IMR-90 (cell line): ENCODE measurements at regions of chr9 and their contacts with region 1.

Region 1: DNA sequence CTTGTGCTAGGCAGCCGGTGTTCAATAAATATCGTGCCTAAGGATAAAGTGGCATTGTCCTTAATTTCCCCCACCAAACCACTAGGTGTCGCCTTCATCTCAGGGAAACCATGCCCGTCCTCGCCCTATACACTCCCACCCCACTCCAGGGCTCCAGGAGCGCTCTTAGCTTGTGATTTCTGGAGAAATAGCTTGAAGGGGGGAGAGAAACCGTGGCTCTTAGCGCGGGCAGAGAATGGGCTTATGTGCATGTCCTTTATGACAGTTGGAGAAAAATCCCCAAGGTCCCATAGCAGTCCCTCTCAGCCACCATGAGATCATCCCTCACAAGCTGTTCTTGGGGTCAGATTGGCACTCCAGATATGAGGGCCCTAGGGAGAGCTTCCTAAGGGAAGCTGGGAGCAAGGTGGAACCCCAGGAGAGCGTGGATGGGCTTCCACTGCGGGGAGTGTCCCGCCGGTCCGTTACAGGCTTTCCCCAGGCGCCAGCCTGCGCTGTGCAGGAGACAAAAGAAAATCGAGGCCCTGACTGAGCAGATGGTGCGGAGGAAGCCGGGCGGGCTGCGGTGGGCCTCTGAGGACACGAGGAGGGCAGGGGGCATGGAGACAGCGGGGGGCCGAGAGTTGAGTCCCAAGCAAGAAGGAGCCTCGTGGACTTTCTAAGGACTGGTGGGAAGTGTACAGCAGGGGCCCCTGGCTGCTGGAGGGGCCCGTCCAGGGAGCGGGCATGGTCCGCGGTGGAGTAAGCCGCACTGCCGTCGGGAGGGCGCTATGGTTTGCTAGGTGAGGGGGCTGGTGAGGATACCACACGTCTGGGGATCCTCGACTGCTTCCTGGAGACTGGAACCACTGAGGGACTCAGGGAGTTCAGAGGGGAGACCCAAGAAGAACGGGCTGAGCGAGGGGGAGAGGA is 750 bp upstream of the NPR2 start:
- DNase-seq: peak; percentile 83
- ATAC-seq: peak; percentile 85
- H3K4me3 ChIP-seq: no peak overlapping the region
- H3K27ac ChIP-seq: peak overlapping the region; percentile 68
- H3K4me1 ChIP-seq: peaks cover 28% of the 10 kb centered on the region
- H3K27me3 ChIP-seq: peaks cover 5% of the 10 kb centered on the region
- CTCF ChIP-seq: peak; percentile 97
- POLR2A ChIP-seq: peak; percentile 47; the same call in 1 of the 2 replicates
- RAD21 ChIP-seq: peak; percentile 99

Region 2: DNA sequence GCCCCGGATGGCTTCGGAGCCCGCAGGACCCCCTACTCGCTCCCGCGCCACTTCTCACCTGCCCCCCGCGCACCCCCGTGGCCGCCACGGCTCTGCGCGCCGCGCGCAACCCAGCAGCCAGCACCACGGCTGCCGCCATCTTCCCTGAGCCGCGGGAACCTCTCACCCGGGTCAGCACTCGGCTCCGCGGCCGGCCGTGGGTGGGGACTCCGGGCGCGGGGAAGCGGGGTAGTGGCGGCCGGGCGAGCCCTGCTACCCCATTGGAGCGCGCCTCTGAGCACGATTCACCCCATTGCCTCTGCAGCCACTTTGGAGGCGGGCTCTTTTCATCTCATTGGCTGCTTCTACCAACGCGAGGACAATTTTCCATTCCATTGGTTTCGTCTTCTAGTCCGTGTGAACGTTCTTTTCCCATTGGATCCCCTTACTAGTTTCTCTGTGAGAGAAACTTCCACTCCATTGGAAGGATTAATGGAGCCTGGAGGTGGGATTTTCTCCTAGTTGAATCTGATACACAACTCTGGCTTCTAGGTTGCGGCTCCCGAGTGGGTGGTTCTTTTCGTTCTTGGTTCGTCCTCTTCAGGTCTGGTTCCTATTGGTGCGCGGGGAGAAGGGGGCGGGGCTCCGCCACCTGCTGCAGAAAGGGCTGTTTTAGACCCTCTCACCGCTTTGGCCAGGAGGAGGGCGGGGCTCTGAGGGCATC is 24.4 kb after region 1 on chr9 and contains the start of gene HINT2:
- CTCF ChIA-PET with region 1: interaction called, 5 read pairs
- POLR2A ChIA-PET with region 1: interaction called, 4 read pairs
- dilution Hi-C with region 1: no loop called
- in situ Hi-C with region 1: no loop called
- intact Hi-C with region 1: loop called (anchors 2 kb)
- DNase-seq: peak; percentile 99
- ATAC-seq: peak; percentile 94
- H3K4me3 ChIP-seq: peak within 1 kb of the TSS; percentile 76
- H3K27ac ChIP-seq: peak within 1 kb of the TSS; percentile 83
- H3K4me1 ChIP-seq: no peaks in the 10 kb centered on the region; the same call in 1 of the 2 replicates
- H3K27me3 ChIP-seq: peaks cover 6% of the 10 kb centered on the region; the same call in 1 of the 2 replicates
- CTCF ChIP-seq: no peak
- POLR2A ChIP-seq: peak; percentile 41; the same call in 1 of the 2 replicates
- RAD21 ChIP-seq: no peak
- total RNA-seq, gene HINT2: 6.7 and 7.5 TPM in 2 replicates

Region 3: GRCh38 chr9:35844716-35845270 is 54.2 kb after region 1 on chr9:
- CTCF ChIA-PET with region 1: no interaction called
- POLR2A ChIA-PET with region 1: no interaction called
- dilution Hi-C with region 1: no loop called
- in situ Hi-C with region 1: no loop called
- intact Hi-C with region 1: no loop called
- DNase-seq: peak; percentile 94
- ATAC-seq: peak; percentile 51
- H3K4me3 ChIP-seq: no peak overlapping the region
- H3K27ac ChIP-seq: peak overlapping the region; percentile 81
- H3K4me1 ChIP-seq: peaks cover 20% of the 10 kb centered on the region
- H3K27me3 ChIP-seq: no peaks in the 10 kb centered on the region
- CTCF ChIP-seq: no peak
- POLR2A ChIP-seq: no peak
- RAD21 ChIP-seq: no peak

Region 4: GRCh38 chr9:35882263-35882848 is 91.7 kb after region 1 on chr9:
- CTCF ChIA-PET with region 1: interaction called, 25 read pairs
- POLR2A ChIA-PET with region 1: interaction called, 3 read pairs
- dilution Hi-C with region 1: no loop called
- in situ Hi-C with region 1: no loop called
- intact Hi-C with region 1: loop called (anchors 1 kb)
- DNase-seq: peak; percentile 71
- ATAC-seq: peak; percentile 94
- H3K4me3 ChIP-seq: no peak overlapping the region
- H3K27ac ChIP-seq: no peak overlapping the region
- H3K4me1 ChIP-seq: no peaks in the 10 kb centered on the region
- H3K27me3 ChIP-seq: peaks cover 5% of the 10 kb centered on the region
- CTCF ChIP-seq: peak; percentile 93
- POLR2A ChIP-seq: no peak
- RAD21 ChIP-seq: peak; percentile 88

Region 5: GRCh38 chr9:35903049-35903448 is 112.4 kb after region 1 on chr9:
- CTCF ChIA-PET with region 1: interaction called, 3 read pairs
- POLR2A ChIA-PET with region 1: no interaction called
- dilution Hi-C with region 1: no loop called
- in situ Hi-C with region 1: no loop called
- intact Hi-C with region 1: loop called (anchors 1 kb)
- DNase-seq: peak; percentile 65
- ATAC-seq: no peak
- H3K4me3 ChIP-seq: no peak overlapping the region
- H3K27ac ChIP-seq: no peak overlapping the region
- H3K4me1 ChIP-seq: peaks cover 29% of the 10 kb centered on the region
- H3K27me3 ChIP-seq: peaks cover 5% of the 10 kb centered on the region; the same call in 1 of the 2 replicates
- CTCF ChIP-seq: peak; percentile 73
- POLR2A ChIP-seq: no peak
- RAD21 ChIP-seq: peak; percentile 73

Region 6: GRCh38 chr9:35914301-35914807 is 123.7 kb after region 1 on chr9:
- CTCF ChIA-PET with region 1: no interaction called
- POLR2A ChIA-PET with region 1: no interaction called
- dilution Hi-C with region 1: no loop called
- in situ Hi-C with region 1: no loop called
- intact Hi-C with region 1: no loop called
- DNase-seq: peak; percentile 47
- ATAC-seq: peak; percentile 64
- H3K4me3 ChIP-seq: no peak overlapping the region
- H3K27ac ChIP-seq: no peak overlapping the region; the same call in 1 of the 2 replicates
- H3K4me1 ChIP-seq: peaks cover 6% of the 10 kb centered on the region
- H3K27me3 ChIP-seq: no peaks in the 10 kb centered on the region
- CTCF ChIP-seq: no peak
- POLR2A ChIP-seq: no peak
- RAD21 ChIP-seq: no peak

Region 7: DNA sequence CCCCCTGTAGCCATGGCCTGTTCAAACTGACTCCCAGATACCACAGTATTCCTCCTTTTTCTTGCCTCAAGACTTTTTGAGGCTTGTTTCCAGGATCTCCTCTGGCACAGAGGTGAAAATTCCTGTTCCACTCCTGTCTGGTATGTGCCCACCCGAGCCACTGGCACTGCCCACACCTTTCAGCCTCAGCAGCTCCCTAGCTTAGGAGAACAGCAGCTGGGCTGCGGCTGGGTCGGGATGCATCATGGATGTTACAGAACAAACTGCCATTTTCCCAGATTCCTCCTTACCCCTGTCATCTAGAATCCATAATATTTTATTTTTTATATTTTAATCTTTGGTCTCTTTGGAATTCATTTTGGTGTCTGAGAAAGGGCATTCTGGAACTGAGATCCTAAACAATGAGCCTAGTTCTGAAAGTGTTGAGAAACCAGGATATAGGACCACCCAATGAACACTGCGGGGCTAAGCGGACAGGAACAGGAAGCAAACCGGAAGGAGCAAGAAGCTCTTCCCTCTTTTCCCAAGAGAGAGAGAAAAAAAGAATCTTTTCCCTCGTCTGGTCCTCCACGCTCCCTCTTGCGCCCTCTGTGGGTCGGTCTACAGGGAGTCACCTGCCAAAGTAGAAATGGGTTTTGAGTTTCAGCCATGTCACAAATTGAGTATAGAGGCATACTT is 154.8 kb after region 1 on chr9:
- CTCF ChIA-PET with region 1: interaction called, 7 read pairs
- POLR2A ChIA-PET with region 1: no interaction called
- dilution Hi-C with region 1: no loop called
- in situ Hi-C with region 1: no loop called
- intact Hi-C with region 1: loop called (anchors 1 kb)
- DNase-seq: peak; percentile 85
- ATAC-seq: peak; percentile 90
- H3K4me3 ChIP-seq: no peak overlapping the region; the same call in 1 of the 2 replicates
- H3K27ac ChIP-seq: peak overlapping the region; percentile 39
- H3K4me1 ChIP-seq: peaks cover 9% of the 10 kb centered on the region
- H3K27me3 ChIP-seq: no peaks in the 10 kb centered on the region
- CTCF ChIP-seq: peak; percentile 90
- POLR2A ChIP-seq: no peak
- RAD21 ChIP-seq: peak; percentile 84